H1 (cell line): ENCODE measurements at regions of chr20 and their contacts with region 1.

Region 1: GRCh38 chr20:2759603-2760296 is 40.7 kb downstream of the CPXM1 start:
- DNase-seq: no peak
- H3K4me3 ChIP-seq: no peak overlapping the region
- H3K27ac ChIP-seq: no peak overlapping the region
- H3K4me1 ChIP-seq: peaks cover 0 to 16% (median 9%) of the 10 kb centered on the region in 4 experiments
- H3K27me3 ChIP-seq: peaks cover 0 to 5% (median 0%) of the 10 kb centered on the region in 4 experiments; a peak in 3 of 7 replicates
- CTCF ChIP-seq: no peak
- EP300 ChIP-seq: no peak
- POLR2A ChIP-seq: no peak
- RAD21 ChIP-seq: no peak

Region 2: DNA sequence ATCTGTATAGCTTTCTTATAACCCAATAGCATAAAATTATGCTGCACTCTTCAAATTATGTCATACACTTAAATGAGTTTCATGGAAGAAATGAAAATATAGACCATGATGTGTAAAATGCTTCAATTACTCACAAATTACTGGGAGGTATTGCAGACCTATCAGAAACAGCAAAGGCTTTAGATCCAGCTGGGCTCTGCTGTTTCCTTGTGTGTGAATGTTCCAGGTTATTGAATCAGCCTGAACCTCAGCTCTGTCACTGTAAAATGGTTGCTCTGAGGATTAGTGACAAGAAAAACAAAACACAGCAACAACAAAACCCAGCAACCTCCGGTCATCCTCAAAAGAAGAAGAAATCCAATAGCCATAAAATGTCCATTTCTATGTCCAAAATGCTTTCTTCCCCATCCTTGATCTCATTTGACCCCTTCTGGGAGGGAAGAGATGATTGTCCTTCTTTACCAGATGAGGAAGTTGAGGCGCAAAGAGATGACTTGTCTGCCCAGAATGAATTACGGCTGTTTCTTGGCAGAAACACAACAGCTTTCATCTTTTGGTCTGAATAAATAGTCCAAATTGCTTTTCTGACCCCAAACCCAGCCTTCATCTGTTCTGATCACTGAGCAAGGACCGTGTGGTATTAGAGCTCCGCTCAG is 421.2 kb before region 1 on chr20:
- CTCF ChIA-PET with region 1: no interaction called
- POLR2A ChIA-PET with region 1: no interaction called
- DNase-seq: no peak
- H3K4me3 ChIP-seq: no peak overlapping the region
- H3K27ac ChIP-seq: no peak overlapping the region
- H3K4me1 ChIP-seq: no peaks in the 10 kb centered on the region
- H3K27me3 ChIP-seq: no peaks in the 10 kb centered on the region
- CTCF ChIP-seq: no peak
- EP300 ChIP-seq: no peak
- POLR2A ChIP-seq: no peak
- RAD21 ChIP-seq: no peak

Region 3: DNA sequence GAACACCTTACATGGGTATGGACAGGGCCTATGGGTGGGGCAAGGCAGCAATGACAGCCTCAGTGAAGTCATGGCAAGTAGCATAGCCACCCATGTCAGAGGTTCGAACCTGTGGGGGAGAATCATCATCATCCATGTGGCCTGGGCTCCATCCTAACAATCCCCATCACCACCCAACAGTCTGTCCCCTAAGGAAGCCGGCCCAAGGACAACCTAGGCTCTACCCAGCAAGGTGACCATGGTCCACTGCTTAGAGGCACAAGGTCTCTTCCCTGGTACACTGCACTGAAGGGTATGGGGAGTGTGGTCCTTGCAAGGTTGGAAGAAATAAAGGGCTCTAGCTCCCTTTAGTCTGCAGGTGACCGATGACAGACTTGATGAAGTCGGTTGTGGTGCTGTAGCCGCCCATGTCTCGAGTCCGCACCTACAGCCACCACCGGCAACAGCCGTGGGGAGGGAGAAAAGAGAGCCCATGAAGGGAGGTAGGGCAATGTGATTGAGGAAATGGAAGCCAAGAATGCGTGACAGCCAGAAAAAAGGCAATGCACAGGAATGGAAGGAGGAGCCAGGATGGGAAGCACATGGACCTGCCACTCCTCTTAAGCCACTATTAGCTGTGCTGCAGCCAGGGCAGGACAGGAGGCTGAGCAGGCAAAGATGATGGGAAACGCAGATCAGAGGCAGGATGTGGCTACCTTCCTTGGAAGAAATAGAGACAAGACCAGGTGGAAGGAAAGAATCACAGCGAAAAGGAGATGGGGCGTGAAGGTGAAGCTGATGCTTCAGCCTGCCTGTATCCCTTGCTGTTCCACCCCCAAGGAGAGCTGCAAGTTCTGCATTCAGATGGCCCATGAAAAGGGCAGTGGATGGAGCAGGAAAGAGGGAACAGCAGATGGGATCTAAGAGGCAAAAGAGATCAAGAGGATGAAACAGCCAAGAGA is 101.1 kb before region 1 on chr20:
- CTCF ChIA-PET with region 1: no interaction called
- POLR2A ChIA-PET with region 1: no interaction called
- DNase-seq: peak in 1 of 2 experiments; percentile 52
- H3K4me3 ChIP-seq: no peak overlapping the region
- H3K27ac ChIP-seq: no peak overlapping the region
- H3K4me1 ChIP-seq: peaks cover 0 to 9% (median 3%) of the 10 kb centered on the region in 4 experiments; a peak in 6 of 7 replicates
- H3K27me3 ChIP-seq: no peaks in the 10 kb centered on the region
- CTCF ChIP-seq: no peak
- EP300 ChIP-seq: no peak
- POLR2A ChIP-seq: peak; percentile 74 to 81; a peak in 2 of 3 replicates
- RAD21 ChIP-seq: no peak

Region 4: DNA sequence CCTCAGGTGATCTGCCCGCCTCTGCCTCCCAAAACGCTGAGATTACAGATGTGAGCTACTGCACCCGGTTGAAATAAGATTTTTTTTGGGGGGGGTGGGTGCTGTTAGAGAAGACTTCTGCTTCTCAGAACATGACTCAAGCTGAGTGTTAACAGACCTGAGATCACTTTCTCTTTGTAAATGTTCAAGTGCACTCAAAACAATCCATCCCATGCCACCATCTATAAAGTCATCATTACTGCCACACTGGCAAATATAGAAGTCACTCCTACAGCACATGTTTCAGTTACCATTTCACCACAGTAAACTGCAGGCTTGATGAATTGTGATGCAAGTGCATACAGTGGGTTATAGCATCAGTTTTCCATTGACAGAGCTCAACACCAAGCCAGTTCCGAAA is 89.8 kb after region 1 on chr20:
- CTCF ChIA-PET with region 1: interaction called, 94 read pairs
- POLR2A ChIA-PET with region 1: interaction called, 4 read pairs
- DNase-seq: no peak
- H3K4me3 ChIP-seq: no peak overlapping the region
- H3K27ac ChIP-seq: no peak overlapping the region
- H3K4me1 ChIP-seq: peaks cover 0 to 4% (median 0%) of the 10 kb centered on the region in 4 experiments; a peak in 3 of 7 replicates
- H3K27me3 ChIP-seq: no peaks in the 10 kb centered on the region
- CTCF ChIP-seq: no peak
- EP300 ChIP-seq: no peak
- POLR2A ChIP-seq: no peak
- RAD21 ChIP-seq: no peak

Region 5: GRCh38 chr20:3032624-3033023 is 272.9 kb after region 1 on chr20:
- CTCF ChIA-PET with region 1: no interaction called
- POLR2A ChIA-PET with region 1: no interaction called
- DNase-seq: no peak
- H3K4me3 ChIP-seq: no peak overlapping the region
- H3K27ac ChIP-seq: no peak overlapping the region
- H3K4me1 ChIP-seq: no peaks in the 10 kb centered on the region
- H3K27me3 ChIP-seq: peaks cover 0 to 2% (median 0%) of the 10 kb centered on the region in 4 experiments; a peak in 1 of 7 replicates
- CTCF ChIP-seq: no peak
- EP300 ChIP-seq: no peak
- POLR2A ChIP-seq: no peak
- RAD21 ChIP-seq: no peak